ENCODE measurements at regions of chr12 and their contacts with region 1.

Region 1: DNA sequence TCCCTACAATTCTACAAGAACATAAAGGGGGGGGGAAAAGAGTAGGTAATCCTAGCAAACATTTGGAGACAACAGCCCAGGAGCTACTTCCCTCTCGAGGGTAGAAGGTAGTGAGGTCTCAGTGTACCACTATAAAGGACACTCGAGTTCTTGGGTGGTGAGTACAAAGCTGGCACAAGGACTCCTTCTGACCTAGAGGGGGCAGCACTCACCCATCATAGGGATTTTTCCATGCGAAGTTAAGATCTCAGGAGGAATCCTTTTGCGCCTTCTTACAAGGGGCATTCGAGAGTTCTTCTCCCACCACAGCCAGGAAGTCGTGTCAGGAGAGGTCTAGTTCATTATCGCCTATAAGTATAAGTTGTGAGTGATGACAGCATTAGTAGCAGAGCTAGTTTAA is 200.2 kb upstream of the RBM19 start:
- DNase-seq: peak in 4 of 5 donors; percentile 29 to 38 (median 30)
- ATAC-seq: peak; percentile 48 to 82 (median 74)
- H3K4me3 ChIP-seq: no peak overlapping the region
- H3K27ac ChIP-seq: no peak overlapping the region
- H3K4me1 ChIP-seq: peaks cover 0 to 3% (median 0%) of the 10 kb centered on the region in 12 donors
- H3K27me3 ChIP-seq: peaks cover 0 to 8% (median 0%) of the 10 kb centered on the region in 9 donors
- CTCF ChIP-seq: peak; percentile 42 to 77 (median 66)
- POLR2A ChIP-seq: no peak

Region 2: DNA sequence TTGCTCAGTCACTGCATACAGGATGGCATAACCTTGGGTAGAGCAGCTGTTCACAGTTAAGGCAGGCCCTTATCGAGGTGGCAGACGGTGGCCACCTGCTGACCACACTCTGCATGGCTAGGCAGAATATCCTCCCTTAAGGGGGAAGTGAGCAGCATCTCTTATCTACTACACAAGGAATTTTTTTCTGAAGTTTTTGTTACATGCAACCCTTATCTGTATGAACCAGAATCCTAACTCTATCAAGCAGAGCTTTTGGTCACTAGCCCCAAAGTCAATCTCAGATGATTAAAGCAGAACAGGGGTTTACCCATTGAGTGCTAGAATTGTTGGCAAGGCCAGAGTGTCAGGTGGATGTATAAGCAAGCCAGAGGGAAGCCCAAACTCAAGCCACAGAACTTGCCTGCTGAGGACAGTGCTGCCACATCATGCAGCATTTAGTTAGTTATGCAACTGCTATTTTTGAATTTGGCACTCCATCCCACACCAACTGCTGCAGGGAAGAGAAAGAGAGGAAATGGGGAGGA is 46.8 kb after region 1 on chr12:
- intact Hi-C with region 1: loop called in 3 of 10 experiments (anchors 2 to 5 kb)
- DNase-seq: peak in 2 of 5 donors; percentile 25 to 45
- ATAC-seq: peak; percentile 80 to 92 (median 86)
- H3K4me3 ChIP-seq: no peak overlapping the region
- H3K27ac ChIP-seq: peak overlapping the region in 3 of 12 donors; percentile 14 to 50 (median 18)
- H3K4me1 ChIP-seq: peaks cover 0 to 17% (median 4%) of the 10 kb centered on the region in 12 donors
- H3K27me3 ChIP-seq: peaks cover 0 to 3% (median 0%) of the 10 kb centered on the region in 9 donors
- CTCF ChIP-seq: peak in 10 of 12 donors; percentile 9 to 42 (median 22)
- POLR2A ChIP-seq: no peak

Region 3: DNA sequence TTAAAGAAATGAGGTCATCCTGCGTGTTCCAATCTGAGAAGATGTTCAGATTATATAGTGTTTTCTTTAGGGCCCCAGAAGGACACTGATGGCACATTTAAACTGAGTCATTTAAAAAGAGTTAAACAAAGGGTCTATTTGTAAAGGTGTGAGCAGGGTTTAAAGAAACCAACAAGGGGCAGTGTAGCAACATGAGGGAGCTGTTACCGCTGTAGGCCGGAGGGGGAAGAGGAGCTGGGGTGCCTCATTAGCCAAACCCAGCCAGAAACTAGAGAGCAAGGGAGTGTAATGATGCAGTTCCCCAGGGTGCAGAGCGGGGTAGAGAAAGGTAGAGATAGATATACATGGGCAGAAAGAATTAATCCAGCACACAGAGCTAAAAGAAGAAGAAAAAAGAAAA is 79.2 kb after region 1 on chr12:
- intact Hi-C with region 1: loop called in 1 of 10 experiments (anchors 5 kb)
- DNase-seq: no peak
- ATAC-seq: peak in 3 of 4 donors; percentile 41 to 59 (median 48)
- H3K4me3 ChIP-seq: no peak overlapping the region
- H3K27ac ChIP-seq: no peak overlapping the region
- H3K4me1 ChIP-seq: peaks cover 0 to 2% (median 0%) of the 10 kb centered on the region in 12 donors
- H3K27me3 ChIP-seq: peaks cover 0 to 15% (median 3%) of the 10 kb centered on the region in 9 donors
- CTCF ChIP-seq: peak in 8 of 12 donors; percentile 8 to 39 (median 26)
- POLR2A ChIP-seq: no peak